ENCODE measurements at regions of chr16 and their contacts with region 1.

Region 1: DNA sequence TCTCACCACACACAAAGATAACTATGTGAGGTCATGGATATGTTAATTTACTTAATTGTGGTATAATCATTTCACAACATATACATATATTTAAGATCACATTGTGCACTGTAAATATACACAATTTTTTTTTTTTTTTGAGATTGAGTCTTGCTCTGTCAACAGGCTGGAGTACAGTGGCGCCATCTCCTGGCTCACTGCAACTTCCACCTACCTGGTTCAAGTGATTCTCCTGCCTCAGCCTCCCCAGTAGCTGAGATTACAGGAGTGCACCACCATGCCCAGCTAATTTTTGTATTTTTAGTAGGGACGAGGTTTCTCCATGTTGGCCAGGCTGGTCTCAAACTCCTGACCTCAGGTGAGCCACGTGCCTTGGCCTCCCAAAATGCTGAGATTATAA is 11.5 kb upstream of the PRSS54 start:
- DNase-seq: peak; percentile 21
- H3K4me3 Mint-ChIP-seq: no peak overlapping the region
- H3K27ac Mint-ChIP-seq: no peak overlapping the region
- H3K4me1 Mint-ChIP-seq: no peaks in the 10 kb centered on the region
- H3K27me3 Mint-ChIP-seq: peaks cover 11% of the 10 kb centered on the region

Region 2: DNA sequence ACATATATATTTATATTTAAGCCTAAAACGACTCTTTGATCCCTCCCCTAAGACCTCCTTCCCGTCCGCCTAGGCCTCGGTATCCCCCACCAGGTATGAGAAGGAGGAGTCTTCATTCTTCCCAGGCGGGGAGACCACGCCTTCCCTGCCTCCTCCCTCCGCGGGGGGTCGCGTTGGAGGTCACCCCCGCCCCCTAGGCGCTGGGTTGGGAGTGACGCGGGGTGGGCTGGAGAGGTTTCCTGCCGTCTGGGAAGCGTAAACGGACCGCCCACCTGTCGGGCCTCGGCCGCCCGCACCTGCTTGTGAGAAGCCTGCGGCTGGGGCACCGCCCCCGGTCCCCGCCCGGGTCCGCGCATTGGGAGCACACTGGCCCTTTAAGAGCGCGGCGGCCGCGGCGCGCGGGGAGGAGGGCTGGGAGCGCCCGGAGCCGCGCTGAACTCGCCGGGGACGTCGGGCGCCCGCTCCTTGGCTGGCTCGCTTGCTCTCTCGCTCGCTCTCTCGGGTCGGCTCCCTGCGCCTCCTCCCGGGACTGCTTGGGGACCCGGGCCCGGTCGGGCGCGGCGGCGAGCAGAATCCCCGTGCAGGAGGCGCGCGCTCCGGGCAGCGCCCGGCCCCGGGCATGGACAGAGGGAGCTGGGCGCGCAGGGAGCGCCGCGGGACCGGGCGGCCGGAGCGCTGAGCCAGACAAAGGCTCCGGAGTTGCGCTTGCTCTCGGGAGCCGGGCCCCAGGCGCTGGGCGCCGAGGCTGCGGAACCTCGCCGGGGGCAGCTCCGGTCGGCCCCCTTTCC is 280.8 kb before region 1 on chr16 and contains the start of gene MMP15:
- intact Hi-C with region 1: loop called (anchors 10 kb)
- DNase-seq: peak; percentile 48
- H3K4me3 Mint-ChIP-seq: peak within 1 kb of the TSS; percentile 85
- H3K27ac Mint-ChIP-seq: peak within 1 kb of the TSS; percentile 72
- H3K4me1 Mint-ChIP-seq: peaks cover 10% of the 10 kb centered on the region
- H3K27me3 Mint-ChIP-seq: peaks cover 21% of the 10 kb centered on the region
- total RNA-seq, gene MMP15: 1.3 and 1.9 TPM in 2 replicates

Measured in activated T-helper 2 cell treated with anti-CD3 and anti-CD28 coated beads, Interferon-gamma antibody, Interleukin-2, Interleukin-4, amounts not matched to agents 10 μg/mL and 5 μg/mL and 100 μg/mL, durations not matched to agents 14 hours and 24 hours and 36 hours (primary cell).